Activated CD4-positive, alpha-beta T cell treated with anti-CD3 and anti-CD28 coated beads, Interleukin-2, amount 10 ng/mL, durations not matched to agents 24 days and 14 days (primary cell): ENCODE measurements at regions of chr20 and their contacts with region 1.

Region 1: GRCh38 chr20:32231847-32232246 is 24.2 kb downstream of the POFUT1 start:
- DNase-seq: peak; percentile 82
- H3K4me3 Mint-ChIP-seq: peak overlapping the region; percentile 75
- H3K27ac Mint-ChIP-seq: peak overlapping the region; percentile 96
- H3K4me1 Mint-ChIP-seq: peaks cover 29% of the 10 kb centered on the region
- H3K27me3 Mint-ChIP-seq: no peaks in the 10 kb centered on the region

Region 2: DNA sequence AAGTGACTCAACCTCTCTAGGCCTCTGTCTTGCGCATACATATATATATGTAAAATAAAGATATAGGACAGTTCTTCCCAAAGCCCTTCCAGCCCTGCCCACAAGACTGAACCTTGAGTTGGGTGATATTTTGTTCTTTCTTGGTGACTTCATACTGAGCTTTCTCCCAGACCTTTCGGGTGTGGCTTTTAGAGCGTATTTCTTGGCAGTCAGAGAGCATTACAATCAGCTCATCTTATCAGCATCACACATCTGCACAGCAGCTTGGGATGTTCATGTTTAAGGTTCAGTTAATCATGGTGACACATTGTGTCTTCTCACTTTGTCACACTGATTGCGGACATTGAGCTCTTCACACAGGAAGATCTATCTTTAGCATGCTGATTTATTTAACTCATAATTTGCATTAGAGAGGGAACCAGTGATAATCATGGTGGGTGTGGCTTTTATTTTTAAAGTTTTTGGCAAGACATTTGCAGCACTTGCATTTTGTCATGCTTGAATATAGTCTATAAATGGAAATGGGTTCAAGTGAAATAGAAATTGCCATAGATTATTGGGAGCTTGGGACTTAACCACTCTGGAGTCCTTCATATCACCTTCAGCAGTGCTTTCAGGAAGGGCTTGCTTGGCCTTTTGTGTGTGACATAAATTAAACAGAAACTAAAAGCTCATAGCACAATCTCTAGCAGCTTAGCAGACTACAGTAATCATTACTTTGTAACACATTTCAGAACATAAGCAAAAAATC is 53.9 kb after region 1 on chr20:
- intact Hi-C with region 1: loop called (anchors 1 kb)
- DNase-seq: peak; percentile 81
- H3K4me3 Mint-ChIP-seq: peak overlapping the region; percentile 59
- H3K27ac Mint-ChIP-seq: peak overlapping the region; percentile 87
- H3K4me1 Mint-ChIP-seq: peaks cover 54% of the 10 kb centered on the region
- H3K27me3 Mint-ChIP-seq: no peaks in the 10 kb centered on the region